SK-N-SH (cell line): ENCODE measurements at regions of chr5 and their contacts with region 1.

Region 1: GRCh38 chr5:18465833-18466591 is 831.8 kb downstream of the TAF11L14 start:
- DNase-seq: peak; percentile 51
- H3K4me3 ChIP-seq: no peak overlapping the region; a peak in 1 of 4 replicates
- H3K27ac ChIP-seq: no peak overlapping the region
- H3K4me1 ChIP-seq: no peaks in the 10 kb centered on the region; a peak in 1 of 4 replicates
- H3K27me3 ChIP-seq: no peaks in the 10 kb centered on the region
- CTCF ChIP-seq: peak; percentile 89
- EP300 ChIP-seq: no peak
- RAD21 ChIP-seq: peak; percentile 90

Region 2: GRCh38 chr5:18393589-18394442 is 72.2 kb before region 1 on chr5:
- CTCF ChIA-PET with region 1: interaction called, 12 read pairs
- POLR2A ChIA-PET with region 1: no interaction called
- DNase-seq: peak; percentile 58
- H3K4me3 ChIP-seq: peak overlapping the region in 1 of 2 experiments; percentile 40; a peak in 1 of 4 replicates
- H3K27ac ChIP-seq: no peak overlapping the region; a peak in 1 of 4 replicates
- H3K4me1 ChIP-seq: peaks cover 0 to 8% of the 10 kb centered on the region in 2 experiments; a peak in 2 of 4 replicates
- H3K27me3 ChIP-seq: no peaks in the 10 kb centered on the region
- CTCF ChIP-seq: peak; percentile 94
- EP300 ChIP-seq: no peak
- RAD21 ChIP-seq: peak; percentile 84

Region 3: GRCh38 chr5:18455521-18455920 is 10.5 kb before region 1 on chr5:
- CTCF ChIA-PET with region 1: interaction called, 19 read pairs
- POLR2A ChIA-PET with region 1: no interaction called
- DNase-seq: no peak
- H3K4me3 ChIP-seq: no peak overlapping the region
- H3K27ac ChIP-seq: no peak overlapping the region
- H3K4me1 ChIP-seq: no peaks in the 10 kb centered on the region
- H3K27me3 ChIP-seq: no peaks in the 10 kb centered on the region
- CTCF ChIP-seq: no peak
- EP300 ChIP-seq: no peak
- RAD21 ChIP-seq: no peak

Region 4: GRCh38 chr5:18686253-18686652 is 220.2 kb after region 1 on chr5:
- CTCF ChIA-PET with region 1: interaction called, 12 read pairs
- POLR2A ChIA-PET with region 1: no interaction called
- DNase-seq: no peak
- H3K4me3 ChIP-seq: no peak overlapping the region
- H3K27ac ChIP-seq: no peak overlapping the region
- H3K4me1 ChIP-seq: no peaks in the 10 kb centered on the region
- H3K27me3 ChIP-seq: peaks cover 5% of the 10 kb centered on the region; the same call in 1 of the 2 replicates
- CTCF ChIP-seq: no peak
- EP300 ChIP-seq: no peak
- RAD21 ChIP-seq: no peak

Region 5: GRCh38 chr5:18699681-18700080 is 233.7 kb after region 1 on chr5:
- CTCF ChIA-PET with region 1: interaction called, 46 read pairs
- POLR2A ChIA-PET with region 1: no interaction called
- DNase-seq: no peak
- H3K4me3 ChIP-seq: no peak overlapping the region
- H3K27ac ChIP-seq: no peak overlapping the region
- H3K4me1 ChIP-seq: peaks cover 0 to 3% of the 10 kb centered on the region in 2 experiments; a peak in 1 of 4 replicates
- H3K27me3 ChIP-seq: no peaks in the 10 kb centered on the region
- CTCF ChIP-seq: no peak
- EP300 ChIP-seq: no peak
- RAD21 ChIP-seq: no peak

Region 6: GRCh38 chr5:18712936-18713485 is 247.0 kb after region 1 on chr5:
- CTCF ChIA-PET with region 1: interaction called, 19 read pairs
- POLR2A ChIA-PET with region 1: no interaction called
- DNase-seq: no peak
- H3K4me3 ChIP-seq: no peak overlapping the region
- H3K27ac ChIP-seq: no peak overlapping the region
- H3K4me1 ChIP-seq: no peaks in the 10 kb centered on the region
- H3K27me3 ChIP-seq: no peaks in the 10 kb centered on the region
- CTCF ChIP-seq: no peak
- EP300 ChIP-seq: no peak
- RAD21 ChIP-seq: no peak